ENCODE measurements at regions of chr11 and their contacts with region 1.

Region 1: GRCh38 chr11:10366568-10367370 is 61.9 kb downstream of the ADM start:
- DNase-seq: peak; percentile 70
- CTCF ChIP-seq: peak; percentile 93

Region 2: DNA sequence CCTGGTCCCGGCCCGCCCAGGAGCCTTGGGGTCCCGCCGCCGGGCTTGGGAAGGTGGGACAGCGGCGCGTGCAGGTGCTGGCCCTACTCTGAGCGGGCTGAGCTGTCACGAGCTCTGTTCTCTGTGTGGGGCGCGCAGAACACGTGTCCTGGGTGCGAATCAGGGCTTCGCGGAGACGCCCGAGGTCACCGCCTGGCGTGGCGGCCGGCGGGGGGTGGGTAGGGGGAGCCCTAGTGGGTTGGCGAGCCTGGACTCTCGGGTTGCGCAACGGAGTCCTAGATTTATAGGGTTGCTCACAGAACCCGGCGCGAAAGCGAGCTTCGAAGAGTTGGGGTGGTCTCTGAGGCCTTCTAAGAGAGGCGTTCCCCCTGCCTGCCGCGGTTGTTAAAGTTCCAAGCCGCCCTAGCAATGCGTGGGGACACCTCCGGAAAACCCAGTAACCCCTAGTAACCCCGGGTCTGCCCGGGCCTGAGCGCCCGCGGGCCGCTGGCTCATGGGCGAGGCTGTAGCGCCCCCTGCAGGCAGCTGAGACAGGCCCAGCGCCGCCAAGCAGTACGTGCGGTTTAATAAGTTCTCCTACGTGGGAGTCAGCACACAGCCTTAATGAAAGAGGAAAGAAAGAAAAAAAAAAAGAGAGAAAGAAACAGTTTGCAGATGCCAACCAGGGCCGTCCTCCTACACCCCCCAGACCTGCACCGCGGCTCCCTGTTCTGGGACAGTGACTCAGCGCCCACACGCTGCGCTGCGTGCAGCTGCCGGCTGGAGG is 59.1 kb before region 1 on chr11:
- CTCF ChIA-PET with region 1: interaction called, 22 read pairs
- POLR2A ChIA-PET with region 1: interaction called, 3 read pairs
- DNase-seq: peak; percentile 81
- CTCF ChIP-seq: peak; percentile 96

Region 3: GRCh38 chr11:10338287-10338686 is 28.5 kb before region 1 on chr11:
- CTCF ChIA-PET with region 1: interaction called, 11 read pairs
- POLR2A ChIA-PET with region 1: no interaction called
- DNase-seq: no peak
- CTCF ChIP-seq: no peak

Region 4: GRCh38 chr11:10387206-10388083 is 20.7 kb after region 1 on chr11:
- CTCF ChIA-PET with region 1: interaction called, 63 read pairs
- POLR2A ChIA-PET with region 1: no interaction called
- DNase-seq: no peak
- CTCF ChIP-seq: no peak

Region 5: GRCh38 chr11:10735481-10736475 is 369.0 kb after region 1 on chr11:
- CTCF ChIA-PET with region 1: interaction called, 15 read pairs
- POLR2A ChIA-PET with region 1: no interaction called
- DNase-seq: peak; percentile 91
- CTCF ChIP-seq: peak; percentile 91

Region 6: GRCh38 chr11:11748706-11749365 is 1382.1 kb after region 1 on chr11:
- CTCF ChIA-PET with region 1: no interaction called
- POLR2A ChIA-PET with region 1: no interaction called
- DNase-seq: no peak
- CTCF ChIP-seq: no peak